ENCODE measurements at regions of chr5 and their contacts with region 1.

Region 1: GRCh38 chr5:119302916-119303897 is 52.6 kb upstream of the TNFAIP8 start:
- DNase-seq: peak; percentile 85
- ATAC-seq: peak; percentile 82
- H3K4me3 ChIP-seq: peak overlapping the region; percentile 19; the same call in 1 of the 2 replicates
- H3K27ac ChIP-seq: peak overlapping the region; percentile 67
- H3K4me1 ChIP-seq: peaks cover 42% of the 10 kb centered on the region
- H3K27me3 ChIP-seq: no peaks in the 10 kb centered on the region
- CTCF ChIP-seq: no peak

Region 2: GRCh38 chr5:119274767-119275130 is 28.5 kb before region 1 on chr5:
- CTCF ChIA-PET with region 1: no interaction called
- POLR2A ChIA-PET with region 1: no interaction called
- intact Hi-C with region 1: loop called (anchors 2 kb)
- DNase-seq: no peak
- ATAC-seq: peak; percentile 46
- H3K4me3 ChIP-seq: peak overlapping the region; percentile 4; the same call in 1 of the 2 replicates
- H3K27ac ChIP-seq: peak overlapping the region; percentile 98
- H3K4me1 ChIP-seq: peaks cover 71% of the 10 kb centered on the region
- H3K27me3 ChIP-seq: no peaks in the 10 kb centered on the region
- CTCF ChIP-seq: no peak

Region 3: DNA sequence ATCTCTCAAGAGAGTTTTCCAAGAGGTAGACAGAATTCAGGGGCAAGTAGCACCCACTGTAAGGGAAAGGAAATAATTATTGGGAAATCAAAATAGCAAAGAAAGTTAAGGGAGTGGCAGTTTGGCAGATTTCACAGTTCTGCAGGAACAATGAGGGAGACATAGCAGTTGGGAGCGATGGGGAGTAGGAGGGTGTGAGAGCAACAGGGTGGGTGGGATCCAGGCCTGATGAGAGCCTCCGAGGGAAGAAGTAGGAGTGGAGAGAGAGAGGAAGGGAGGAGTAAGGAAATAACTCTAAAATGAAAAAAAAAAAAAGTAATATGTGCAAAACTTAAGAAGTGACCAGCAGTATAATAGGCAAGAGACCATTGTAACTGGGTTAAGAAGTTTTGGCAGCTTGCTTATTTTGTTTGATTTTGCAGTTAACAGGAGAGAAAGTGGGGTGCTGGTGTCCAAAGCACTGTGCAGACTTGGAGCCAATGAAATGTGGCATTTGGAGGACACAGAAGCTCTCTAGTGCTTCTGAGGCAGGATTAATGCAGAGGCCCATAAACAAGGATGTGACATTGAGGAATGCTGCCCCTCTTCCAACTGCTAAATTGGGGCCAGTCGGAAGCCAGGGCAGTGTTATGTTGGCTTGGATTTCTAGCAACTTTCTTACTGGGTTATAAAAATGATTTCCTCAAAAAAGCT is 62.8 kb after region 1 on chr5:
- CTCF ChIA-PET with region 1: no interaction called
- POLR2A ChIA-PET with region 1: interaction called, 10 read pairs
- intact Hi-C with region 1: no loop called
- DNase-seq: no peak
- ATAC-seq: no peak
- H3K4me3 ChIP-seq: no peak overlapping the region
- H3K27ac ChIP-seq: no peak overlapping the region
- H3K4me1 ChIP-seq: peaks cover 33% of the 10 kb centered on the region
- H3K27me3 ChIP-seq: no peaks in the 10 kb centered on the region
- CTCF ChIP-seq: no peak